ENCODE measurements at regions of chr12 and their contacts with region 1.

Region 1: GRCh38 chr12:12999959-13000615 is at the start of gene HEBP1:
- DNase-seq: peak; percentile 98
- H3K4me3 ChIP-seq: peak within 1 kb of the TSS; percentile 87 to 93 (median 88)
- H3K27ac ChIP-seq: peak within 1 kb of the TSS; percentile 94 to 99 (median 97)
- H3K4me1 ChIP-seq: peaks cover 32 to 61% (median 50%) of the 10 kb centered on the region in 4 donors
- H3K27me3 ChIP-seq: no peaks in the 10 kb centered on the region
- CTCF ChIP-seq: no peak
- EP300 ChIP-seq: no peak
- POLR2A ChIP-seq: peak; percentile 69
- total RNA-seq, gene HEBP1: 40.6 to 70.6 (median 61.9) TPM

Region 2: GRCh38 chr12:13044002-13044905 is 44.2 kb after region 1 on chr12 and contains the start of gene FAM234B:
- intact Hi-C with region 1: loop called (anchors 2 kb)
- DNase-seq: peak; percentile 88
- H3K4me3 ChIP-seq: peak within 1 kb of the TSS; percentile 89 to 94 (median 92)
- H3K27ac ChIP-seq: peak within 1 kb of the TSS; percentile 68 to 77 (median 74)
- H3K4me1 ChIP-seq: peaks cover 0 to 16% (median 12%) of the 10 kb centered on the region in 4 donors
- H3K27me3 ChIP-seq: no peaks in the 10 kb centered on the region
- CTCF ChIP-seq: peak; percentile 8 to 40 (median 31)
- EP300 ChIP-seq: no peak
- POLR2A ChIP-seq: no peak
- total RNA-seq, gene FAM234B: 1.2 to 6.7 (median 5.0) TPM